MCF 10A (cell line): ENCODE measurements at regions of chr12 and their contacts with region 1.

Region 1: GRCh38 chr12:5982106-5982505 is 37.0 kb upstream of the ANO2 start:
- DNase-seq: no peak
- H3K4me3 Mint-ChIP-seq: no peak overlapping the region
- H3K27ac Mint-ChIP-seq: no peak overlapping the region
- H3K4me1 Mint-ChIP-seq: no peaks in the 10 kb centered on the region
- H3K27me3 Mint-ChIP-seq: peaks cover 22% of the 10 kb centered on the region
- CTCF ChIP-seq: no peak

Region 2: GRCh38 chr12:5965950-5966383 is 16.1 kb before region 1 on chr12:
- CTCF ChIA-PET with region 1: interaction called, 11 read pairs
- POLR2A ChIA-PET with region 1: no interaction called
- intact Hi-C with region 1: no loop called
- DNase-seq: peak; percentile 61
- H3K4me3 Mint-ChIP-seq: no peak overlapping the region
- H3K27ac Mint-ChIP-seq: no peak overlapping the region
- H3K4me1 Mint-ChIP-seq: no peaks in the 10 kb centered on the region
- H3K27me3 Mint-ChIP-seq: peaks cover 50% of the 10 kb centered on the region
- CTCF ChIP-seq: peak; percentile 69